ENCODE measurements at regions of chr12 and their contacts with region 1.

Region 1: GRCh38 chr12:55738123-55739024 is 4.5 kb upstream of the GDF11 start:
- DNase-seq: peak; percentile 96
- H3K4me3 Mint-ChIP-seq: peak overlapping the region; percentile 88
- H3K27ac Mint-ChIP-seq: peak overlapping the region; percentile 85
- H3K4me1 Mint-ChIP-seq: peaks cover 31% of the 10 kb centered on the region
- H3K27me3 Mint-ChIP-seq: peaks cover 4% of the 10 kb centered on the region

Region 2: DNA sequence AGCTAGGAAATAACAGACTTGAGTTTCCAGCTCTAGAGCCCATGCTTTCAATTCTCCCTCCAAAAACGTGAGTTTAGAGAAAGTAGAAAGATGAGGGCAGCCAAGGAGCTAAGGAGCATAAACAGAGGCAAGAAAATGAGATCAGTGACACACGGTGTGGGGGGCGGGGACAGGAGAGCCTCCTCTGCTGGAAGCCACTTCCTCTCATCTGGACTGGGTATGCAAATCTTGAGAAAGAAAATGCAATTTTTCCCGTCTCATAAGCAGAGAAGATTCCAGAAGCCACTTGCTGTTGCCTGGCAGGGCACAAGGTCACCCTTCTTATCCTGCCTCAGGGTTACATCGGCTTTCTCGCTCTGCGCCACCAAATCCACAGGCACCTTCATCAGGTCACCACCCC is 95.7 kb before region 1 on chr12:
- intact Hi-C with region 1: no loop called
- DNase-seq: peak; percentile 76
- H3K4me3 Mint-ChIP-seq: no peak overlapping the region
- H3K27ac Mint-ChIP-seq: no peak overlapping the region
- H3K4me1 Mint-ChIP-seq: peaks cover 19% of the 10 kb centered on the region
- H3K27me3 Mint-ChIP-seq: peaks cover 4% of the 10 kb centered on the region

Region 3: DNA sequence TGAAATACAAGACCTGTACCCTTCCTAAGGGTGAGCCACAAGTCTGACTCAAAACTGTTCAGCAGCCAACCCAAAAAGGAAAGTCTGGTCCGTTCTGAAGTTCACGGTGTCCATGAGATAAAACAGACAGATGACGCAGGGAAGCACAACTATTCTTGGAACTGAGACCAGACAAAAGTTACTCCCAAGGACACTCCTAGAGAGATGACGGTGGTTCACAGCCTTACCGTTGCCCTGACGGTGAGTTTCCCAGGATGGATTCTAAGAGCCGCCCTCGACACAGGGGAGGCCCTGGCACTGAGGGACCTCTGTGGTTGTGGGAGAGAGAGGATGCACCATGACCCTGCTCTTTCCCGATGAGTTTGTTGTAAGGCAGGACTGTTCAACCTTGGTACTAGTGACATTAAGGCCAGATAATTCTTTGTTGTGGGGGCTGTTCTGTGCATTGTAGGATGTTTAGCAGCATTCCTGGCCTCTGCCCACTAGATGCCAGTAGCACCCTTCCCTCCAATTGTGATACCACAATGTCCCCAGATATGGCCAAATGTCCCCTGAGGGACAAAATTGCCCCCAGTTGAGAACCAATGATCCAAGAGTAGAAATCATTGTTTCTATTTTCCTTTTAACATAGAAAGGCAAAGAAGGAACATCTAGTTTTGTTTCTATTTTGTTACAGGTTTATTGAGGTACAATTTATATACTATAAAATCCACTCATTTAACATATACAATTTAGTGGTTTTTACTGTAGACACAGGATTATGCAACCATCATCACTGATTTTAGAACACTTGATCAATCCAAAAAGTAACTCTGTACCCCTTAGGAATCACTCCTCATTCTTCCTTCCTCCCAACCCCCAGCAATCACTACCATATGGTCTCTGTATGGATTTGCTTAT is 78.6 kb before region 1 on chr12:
- intact Hi-C with region 1: loop called (anchors 5 kb)
- DNase-seq: no peak
- H3K4me3 Mint-ChIP-seq: no peak overlapping the region
- H3K27ac Mint-ChIP-seq: no peak overlapping the region
- H3K4me1 Mint-ChIP-seq: no peaks in the 10 kb centered on the region
- H3K27me3 Mint-ChIP-seq: peaks cover 25% of the 10 kb centered on the region

Region 4: GRCh38 chr12:55797068-55797467 is 58.7 kb after region 1 on chr12:
- intact Hi-C with region 1: loop called (anchors 1 kb)
- DNase-seq: peak; percentile 73
- H3K4me3 Mint-ChIP-seq: no peak overlapping the region
- H3K27ac Mint-ChIP-seq: peak overlapping the region; percentile 26
- H3K4me1 Mint-ChIP-seq: peaks cover 8% of the 10 kb centered on the region
- H3K27me3 Mint-ChIP-seq: no peaks in the 10 kb centered on the region

Region 5: DNA sequence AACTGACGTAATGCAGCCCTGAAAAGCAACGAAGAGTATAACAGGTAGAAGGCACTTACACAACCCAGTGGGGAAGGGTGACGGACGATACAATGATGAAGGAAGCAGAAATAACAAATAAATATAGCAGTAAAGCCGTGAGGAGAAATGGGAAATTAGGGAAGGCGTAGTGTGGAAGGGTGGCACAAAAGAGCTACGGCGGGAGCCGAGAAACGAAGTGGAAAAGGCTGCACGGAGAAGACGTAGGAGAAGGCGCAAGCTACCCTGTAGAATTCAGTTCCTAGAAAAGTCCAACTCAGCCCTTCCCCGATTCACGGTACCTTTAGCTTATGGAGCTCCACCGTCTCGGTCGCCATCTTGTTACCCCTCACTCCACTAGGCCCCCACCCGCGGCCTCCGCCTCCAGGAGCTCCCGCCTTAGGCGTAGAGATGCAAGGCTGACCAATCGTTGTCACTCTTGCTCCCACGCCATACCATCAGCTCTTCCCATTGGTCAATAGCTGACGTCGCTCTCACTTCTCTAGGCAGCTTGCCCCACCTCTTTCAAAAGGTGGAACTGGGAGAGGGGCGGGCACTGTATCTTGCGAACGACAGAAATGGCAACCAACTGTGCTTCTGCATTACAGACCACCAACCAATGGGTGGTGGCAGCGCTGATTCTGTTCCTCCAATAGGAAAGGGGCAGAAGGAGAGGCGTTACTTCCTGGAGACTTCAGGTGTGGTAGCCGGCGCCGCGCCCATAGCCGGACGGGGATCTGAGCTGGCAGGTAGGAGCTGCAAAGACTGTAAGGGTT is 79.2 kb after region 1 on chr12 and contains the starts of genes ORMDL2 and SARNP:
- intact Hi-C with region 1: loop called (anchors 1 kb)
- DNase-seq: peak; percentile 99
- H3K4me3 Mint-ChIP-seq: no peak within 1 kb of the TSS
- H3K27ac Mint-ChIP-seq: peak within 1 kb of the TSS; percentile 39
- H3K4me1 Mint-ChIP-seq: peaks cover 23% of the 10 kb centered on the region
- H3K27me3 Mint-ChIP-seq: no peaks in the 10 kb centered on the region
- total RNA-seq, gene ORMDL2: 49.8 and 55.8 TPM in 2 replicates
- total RNA-seq, gene SARNP: 76.6 and 81.6 TPM in 2 replicates

Region 6: DNA sequence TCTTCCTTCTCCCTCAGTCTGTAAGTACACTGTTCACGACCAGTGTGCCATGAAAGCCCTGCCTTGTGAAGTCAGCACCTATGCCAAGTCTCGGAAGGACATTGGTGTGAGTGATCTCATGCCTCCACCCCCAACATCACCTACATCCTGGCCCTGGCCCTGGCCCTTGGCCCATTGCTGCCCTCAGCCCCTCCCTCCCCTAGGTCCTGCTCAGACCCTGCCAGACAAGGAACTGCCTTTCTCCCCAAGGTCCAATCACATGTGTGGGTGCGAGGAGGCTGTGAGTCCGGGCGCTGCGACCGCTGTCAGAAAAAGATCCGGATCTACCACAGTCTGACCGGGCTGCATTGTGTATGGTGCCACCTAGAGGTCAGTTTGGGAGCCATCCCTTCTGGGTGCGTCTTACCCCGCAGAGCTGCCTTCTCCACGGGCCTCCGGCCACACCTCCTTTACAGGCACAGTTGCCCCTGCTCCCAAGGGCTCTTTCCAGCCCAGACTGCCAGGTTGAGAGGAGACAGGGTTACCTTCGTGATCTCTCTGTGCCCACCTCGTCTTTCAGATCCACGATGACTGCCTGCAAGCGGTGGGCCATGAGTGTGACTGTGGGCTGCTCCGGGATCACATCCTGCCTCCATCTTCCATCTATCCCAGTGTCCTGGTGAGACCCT is 201.8 kb after region 1 on chr12:
- intact Hi-C with region 1: loop called (anchors 1 kb)
- DNase-seq: peak; percentile 95
- H3K4me3 Mint-ChIP-seq: peak overlapping the region; percentile 60
- H3K27ac Mint-ChIP-seq: peak overlapping the region; percentile 76
- H3K4me1 Mint-ChIP-seq: peaks cover 67% of the 10 kb centered on the region
- H3K27me3 Mint-ChIP-seq: no peaks in the 10 kb centered on the region

Region 7: DNA sequence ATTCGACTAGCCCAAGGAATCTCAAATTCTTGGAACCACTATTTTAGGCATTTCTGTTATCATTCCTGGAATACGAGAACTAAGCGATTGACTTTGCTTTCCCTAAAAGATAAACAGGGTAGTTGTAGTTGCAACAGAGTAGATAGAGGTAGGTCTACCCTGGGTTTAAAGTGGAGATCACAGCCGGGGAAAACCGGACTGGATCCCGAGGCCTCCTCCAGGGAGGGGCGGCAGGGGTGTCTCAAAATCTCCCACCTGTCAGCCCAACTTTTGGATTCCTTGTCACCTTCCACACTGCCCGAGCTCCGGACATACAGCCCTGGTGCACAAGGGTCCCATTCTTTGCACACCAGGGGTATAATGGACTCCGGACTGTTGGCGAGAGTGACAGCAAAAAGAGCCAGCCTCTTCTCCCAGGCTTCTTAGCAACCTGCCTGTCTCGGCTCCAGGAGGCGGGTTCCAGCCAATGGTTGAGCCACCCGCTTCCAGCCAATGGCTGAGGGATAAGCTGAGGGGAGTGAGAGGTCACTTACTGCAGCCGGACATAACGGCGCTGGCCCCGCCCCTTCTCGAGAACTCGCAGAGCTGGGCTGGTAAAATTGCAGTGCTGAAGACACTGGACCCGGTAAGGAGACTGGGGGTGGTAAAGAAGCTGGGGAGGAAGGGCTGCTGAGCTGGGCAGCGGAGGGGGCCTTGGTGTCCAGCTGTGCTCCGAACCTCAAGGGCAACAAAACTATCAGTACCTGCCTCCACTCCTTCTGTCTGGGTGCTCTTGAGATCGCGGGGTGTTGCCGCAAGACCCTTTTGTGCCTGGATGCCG is 258.6 kb after region 1 on chr12 and contains the start of gene SUOX:
- intact Hi-C with region 1: loop called (anchors 1 kb)
- DNase-seq: peak; percentile 86
- H3K4me3 Mint-ChIP-seq: peak within 1 kb of the TSS; percentile 87
- H3K27ac Mint-ChIP-seq: peak within 1 kb of the TSS; percentile 53
- H3K4me1 Mint-ChIP-seq: peaks cover 28% of the 10 kb centered on the region
- H3K27me3 Mint-ChIP-seq: no peaks in the 10 kb centered on the region
- total RNA-seq, gene SUOX: 9.3 and 10.2 TPM in 2 replicates

Measured in activated CD4-positive, alpha-beta T cell treated with anti-CD3 and anti-CD28 coated beads, Interleukin-2, amount 10 ng/mL, durations not matched to agents 24 days and 14 days (primary cell).